Caco-2 (cell line): ENCODE measurements at regions of chr13 and their contacts with region 1.

Region 1: DNA sequence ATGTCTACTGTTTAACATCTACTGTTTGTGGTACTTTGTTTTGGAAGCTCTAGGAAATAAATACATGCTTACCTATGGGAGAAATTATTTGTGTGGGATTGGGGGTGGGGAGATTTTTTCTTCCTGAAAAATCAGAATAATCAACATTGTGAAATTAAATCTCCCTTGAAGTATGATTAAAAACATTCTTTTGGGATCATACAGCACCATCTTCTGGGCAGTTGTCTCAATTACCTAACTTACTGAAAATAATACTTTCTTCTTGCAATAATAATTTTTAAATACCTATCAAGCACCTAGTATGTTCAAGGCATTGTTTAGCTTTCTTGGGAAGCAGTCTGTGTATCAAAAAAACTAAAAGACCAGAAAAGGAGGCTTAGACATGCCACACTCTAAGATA is 576.5 kb upstream of the ARGLU1 start:
- DNase-seq: no peak
- H3K4me3 ChIP-seq: no peak overlapping the region
- H3K4me3 Mint-ChIP-seq: no peak overlapping the region
- H3K27ac Mint-ChIP-seq: no peak overlapping the region
- H3K4me1 ChIP-seq: 0 out of 2 replicates have a peak, but pooled peaks cover 3% of the 10 kb centered on the region
- H3K4me1 Mint-ChIP-seq: no peaks in the 10 kb centered on the region
- H3K27me3 ChIP-seq: no peaks in the 10 kb centered on the region
- H3K27me3 Mint-ChIP-seq: no peaks in the 10 kb centered on the region
- CTCF ChIP-seq: peak; percentile 24 to 45

Region 2: GRCh38 chr13:105410602-105411001 is 1733.8 kb before region 1 on chr13:
- CTCF ChIA-PET with region 1: no interaction called
- POLR2A ChIA-PET with region 1: no interaction called
- intact Hi-C with region 1: loop called (anchors 10 kb)
- DNase-seq: peak; percentile 60 to 76
- H3K4me3 ChIP-seq: no peak overlapping the region
- H3K4me3 Mint-ChIP-seq: no peak overlapping the region
- H3K27ac Mint-ChIP-seq: no peak overlapping the region
- H3K4me1 ChIP-seq: no peaks in the 10 kb centered on the region
- H3K4me1 Mint-ChIP-seq: no peaks in the 10 kb centered on the region
- H3K27me3 ChIP-seq: no peaks in the 10 kb centered on the region
- H3K27me3 Mint-ChIP-seq: no peaks in the 10 kb centered on the region
- CTCF ChIP-seq: peak; percentile 62 to 79